ENCODE measurements at regions of chr16 and their contacts with region 1.

Region 1: GRCh38 chr16:23324730-23325129 is 22.6 kb downstream of the SCNN1B start:
- DNase-seq: no peak

Region 2: GRCh38 chr16:23114131-23114904 is 210.4 kb before region 1 on chr16:
- intact Hi-C with region 1: no loop called
- DNase-seq: no peak

Region 3: DNA sequence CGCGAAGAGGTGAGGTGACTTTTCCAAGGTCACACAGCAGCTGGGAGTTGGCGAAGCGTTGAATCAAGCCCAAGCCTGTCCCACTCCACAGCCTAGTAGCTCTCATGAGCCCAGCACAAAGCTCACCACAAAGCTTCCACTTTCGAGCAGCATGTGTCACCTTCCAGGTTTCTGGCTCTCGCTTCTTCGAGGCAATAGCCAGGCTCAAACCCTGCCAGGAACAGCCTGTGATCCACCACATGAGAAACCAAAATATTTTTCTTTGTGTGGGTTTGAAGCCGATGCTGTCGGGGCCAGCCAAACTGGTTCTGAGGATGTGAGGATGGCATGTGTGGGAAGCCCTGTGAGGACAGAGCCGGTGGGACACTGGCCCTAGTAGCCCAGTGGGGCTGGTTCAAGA is 60.1 kb after region 1 on chr16:
- intact Hi-C with region 1: loop called (anchors 10 kb)
- DNase-seq: no peak